ENCODE measurements at regions of chr12 and their contacts with region 1.

Region 1: DNA sequence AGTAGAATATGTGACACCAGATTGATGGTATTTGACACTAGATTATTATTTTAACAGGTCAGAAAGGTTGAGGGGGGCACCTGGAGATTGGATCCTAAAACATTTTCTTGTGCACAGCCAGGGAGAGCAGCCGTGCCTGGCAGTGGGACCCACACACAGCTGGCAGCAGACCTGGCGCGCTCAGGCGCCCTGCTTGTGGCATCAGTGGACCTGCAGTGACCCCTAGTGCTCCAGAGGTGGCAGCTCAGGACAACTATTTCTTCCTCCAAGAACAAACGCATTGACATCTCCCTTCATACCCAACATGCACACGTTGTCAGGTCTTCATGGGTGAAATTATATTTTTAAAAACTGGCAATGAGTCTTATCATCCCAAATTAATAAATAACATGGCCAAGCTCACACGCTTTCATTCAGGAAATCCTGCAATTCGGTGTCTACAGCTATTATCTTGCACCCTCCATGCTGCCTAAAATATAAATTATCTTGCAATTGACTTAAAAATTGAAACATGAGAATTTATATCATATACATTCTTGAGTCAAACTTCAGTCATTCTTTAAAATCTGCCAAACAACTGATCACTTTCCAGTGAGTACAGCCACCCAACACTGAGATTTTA is 7.7 kb upstream of the TMEM132D start:
- DNase-seq: peak; percentile 76 to 98 (median 84)

Region 2: DNA sequence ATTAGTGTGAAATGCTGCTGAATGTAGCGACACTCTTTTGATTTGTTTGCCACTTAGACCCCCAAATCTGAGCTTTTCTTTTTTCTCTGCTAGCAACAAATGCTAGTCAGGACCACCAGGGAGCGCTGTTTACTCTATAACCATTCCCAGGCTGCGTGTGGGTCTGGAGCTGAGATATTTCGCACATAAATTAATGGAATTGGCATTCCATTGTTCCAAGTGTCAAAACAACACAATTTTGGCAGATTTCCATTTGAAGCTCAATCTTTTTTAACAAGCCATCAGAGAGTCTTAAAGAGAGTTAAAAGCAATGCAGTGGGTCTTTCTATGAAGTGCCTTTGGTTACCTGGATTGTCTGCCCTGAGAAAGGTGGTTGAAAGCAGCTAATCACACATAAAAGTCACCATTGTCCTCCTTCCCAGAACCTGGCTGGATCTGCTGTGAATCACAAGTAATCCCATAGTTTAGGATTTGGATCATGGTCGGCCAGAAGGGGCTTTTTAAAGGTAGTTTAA is 1651.9 kb before region 1 on chr12:
- intact Hi-C with region 1: loop called (anchors 2 kb)
- DNase-seq: peak in 8 of 10 donors; percentile 57 to 92 (median 68)

Region 3: GRCh38 chr12:128652136-128652751 is 1259.3 kb before region 1 on chr12:
- intact Hi-C with region 1: loop called (anchors 5 kb)
- DNase-seq: peak in 5 of 10 donors; percentile 12 to 78 (median 45)

Region 4: GRCh38 chr12:128783129-128783574 is 1128.4 kb before region 1 on chr12:
- intact Hi-C with region 1: loop called (anchors 5 kb)
- DNase-seq: no peak

Region 5: GRCh38 chr12:128969480-128970055 is 942.0 kb before region 1 on chr12:
- intact Hi-C with region 1: loop called (anchors 5 kb)
- DNase-seq: peak; percentile 36 to 96 (median 80)

Region 6: DNA sequence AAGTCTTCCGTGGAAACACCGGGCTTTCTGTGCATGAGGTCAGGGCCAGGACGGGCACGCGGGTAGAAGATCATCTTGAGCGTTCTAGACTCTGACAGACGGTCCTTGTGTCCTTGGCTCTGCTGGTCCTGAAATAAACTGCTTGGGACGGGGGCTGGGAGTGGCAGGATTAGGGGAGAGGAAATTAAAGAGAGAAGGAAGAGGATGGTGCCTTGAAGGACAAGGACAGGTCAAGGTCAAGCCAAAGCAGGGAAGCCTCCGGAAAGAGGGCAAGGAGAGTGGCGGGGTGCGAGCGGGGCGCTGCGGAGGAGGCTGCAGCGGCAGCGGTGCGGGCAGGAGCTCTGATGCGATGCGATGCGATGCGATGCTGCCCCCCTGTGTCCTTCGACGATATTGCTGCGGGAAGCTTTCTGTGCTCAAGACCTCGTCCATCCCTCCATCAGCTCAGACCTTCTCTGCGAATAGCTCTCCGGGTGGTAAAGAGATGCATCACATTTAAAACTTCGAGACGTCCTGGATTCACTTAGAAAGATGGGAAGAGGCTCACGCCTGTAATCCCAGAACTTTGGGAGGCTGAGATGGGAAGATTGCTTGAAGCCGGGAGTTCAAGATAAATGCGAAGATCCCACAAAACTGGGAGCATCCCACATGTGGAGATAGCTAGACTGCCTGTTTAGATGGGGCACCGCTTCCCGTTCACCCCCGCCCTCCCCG is 102.4 kb after region 1 on chr12:
- intact Hi-C with region 1: loop called (anchors 1 kb)
- DNase-seq: peak; percentile 79 to 97 (median 88)

Measured in posterior cingulate gyrus (tissue), 11 donors.